Heart left ventricle (tissue), 16 donors: ENCODE measurements at regions of chr2 and their contacts with region 1.

Region 1: GRCh38 chr2:206800506-206801417 is 35.4 kb downstream of the FASTKD2 start:
- DNase-seq: peak in 4 of 5 donors; percentile 58 to 72 (median 64)
- ATAC-seq: peak; percentile 67 to 81 (median 73)
- H3K4me3 ChIP-seq: peak overlapping the region in 4 of 12 donors; percentile 20 to 36 (median 26)
- H3K27ac ChIP-seq: no peak overlapping the region
- H3K4me1 ChIP-seq: peaks cover 0 to 28% (median 9%) of the 10 kb centered on the region in 12 donors
- H3K27me3 ChIP-seq: no peaks in the 10 kb centered on the region
- CTCF ChIP-seq: peak; percentile 56 to 82 (median 74)
- POLR2A ChIP-seq: no peak

Region 2: GRCh38 chr2:206846981-206847834 is 46.4 kb after region 1 on chr2:
- intact Hi-C with region 1: no loop called
- DNase-seq: no peak
- ATAC-seq: peak; percentile 30 to 74 (median 56)
- H3K4me3 ChIP-seq: no peak overlapping the region
- H3K27ac ChIP-seq: no peak overlapping the region
- H3K4me1 ChIP-seq: peaks cover 0 to 15% (median 0%) of the 10 kb centered on the region in 12 donors
- H3K27me3 ChIP-seq: no peaks in the 10 kb centered on the region
- CTCF ChIP-seq: no peak
- POLR2A ChIP-seq: no peak

Region 3: DNA sequence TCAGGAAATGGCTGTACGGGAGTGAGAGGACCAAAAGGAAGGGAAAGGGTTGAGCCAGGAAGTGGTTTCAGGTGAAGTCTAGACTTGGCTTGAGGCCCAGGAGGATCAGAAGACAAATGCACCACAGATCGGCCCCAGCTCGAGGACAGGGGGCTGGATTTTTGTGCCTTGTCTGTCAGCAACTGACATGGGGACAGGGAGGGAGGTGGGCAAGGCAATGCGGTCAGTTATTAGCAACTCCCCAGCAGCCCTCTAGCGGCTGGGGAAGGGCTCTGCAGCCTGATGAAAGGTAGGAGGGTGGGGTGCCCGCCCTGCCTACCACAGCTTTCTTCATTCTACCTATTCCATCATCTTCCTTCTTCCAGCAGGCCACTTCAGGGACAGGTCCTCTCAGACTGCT is 188.5 kb after region 1 on chr2:
- intact Hi-C with region 1: loop called in 6 of 10 experiments (anchors 2 to 5 kb)
- DNase-seq: peak in 4 of 5 donors; percentile 23 to 68 (median 36)
- ATAC-seq: peak; percentile 42 to 84 (median 82)
- H3K4me3 ChIP-seq: no peak overlapping the region
- H3K27ac ChIP-seq: no peak overlapping the region
- H3K4me1 ChIP-seq: peaks cover 0 to 17% (median 0%) of the 10 kb centered on the region in 12 donors
- H3K27me3 ChIP-seq: no peaks in the 10 kb centered on the region
- CTCF ChIP-seq: peak; percentile 61 to 81 (median 71)
- POLR2A ChIP-seq: no peak

Region 4: GRCh38 chr2:207046724-207047123 is 246.0 kb after region 1 on chr2:
- intact Hi-C with region 1: loop called in 1 of 10 experiments (anchors 5 kb)
- DNase-seq: no peak
- ATAC-seq: peak in 3 of 4 donors; percentile 65 to 77 (median 73)
- H3K4me3 ChIP-seq: no peak overlapping the region
- H3K27ac ChIP-seq: peak overlapping the region in 1 of 12 donors; percentile 0
- H3K4me1 ChIP-seq: peaks cover 0 to 22% (median 6%) of the 10 kb centered on the region in 12 donors
- H3K27me3 ChIP-seq: no peaks in the 10 kb centered on the region
- CTCF ChIP-seq: peak in 7 of 12 donors; percentile 29 to 50 (median 37)
- POLR2A ChIP-seq: no peak